ENCODE measurements at regions of chr16 and their contacts with region 1.

Region 1: DNA sequence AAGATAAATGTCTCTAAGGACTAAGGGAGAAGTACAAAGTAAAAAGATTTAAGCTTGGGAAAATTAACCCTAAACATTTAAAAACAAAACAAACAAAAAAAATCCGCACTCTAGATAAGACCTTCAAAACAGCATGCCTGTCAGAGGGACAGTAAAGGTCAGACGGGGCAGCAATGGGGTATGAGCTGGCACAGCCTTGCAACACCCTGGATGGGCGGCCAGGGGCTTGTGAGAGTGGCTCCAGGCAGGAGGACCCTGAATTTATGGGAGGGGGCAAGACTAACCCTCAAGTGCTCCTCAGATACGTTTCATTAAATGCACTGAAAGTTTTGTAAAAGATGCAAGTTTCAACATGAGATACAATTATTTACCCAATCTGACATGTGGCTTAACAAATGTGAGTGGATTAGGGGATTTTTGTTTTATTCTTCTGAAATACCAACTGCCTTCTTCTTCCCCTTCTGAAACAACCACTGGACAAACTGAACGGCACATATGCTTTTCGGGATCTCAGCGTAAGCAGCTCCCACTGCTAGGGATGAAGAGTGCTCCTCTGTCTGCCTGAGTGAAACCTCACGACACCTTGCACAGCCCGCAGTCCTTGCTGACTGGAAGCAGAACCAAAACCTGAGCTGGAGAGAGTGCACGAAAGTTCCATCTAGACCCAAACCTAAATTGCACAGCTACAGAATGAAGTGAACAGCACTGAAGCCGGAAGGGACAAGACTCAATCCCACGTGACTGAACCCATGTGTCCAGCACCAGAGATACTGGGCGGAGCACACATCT is 128.4 kb downstream of the ANKRD11 start:
- DNase-seq: no peak
- ATAC-seq: no peak
- H3K4me3 ChIP-seq: peak overlapping the region in 1 of 2 experiments; percentile 16
- H3K4me3 Mint-ChIP-seq: peak overlapping the region; percentile 8
- H3K27ac ChIP-seq: peak overlapping the region; percentile 11 to 56
- H3K27ac Mint-ChIP-seq: peak overlapping the region; percentile 92
- H3K4me1 ChIP-seq: peaks cover 80% of the 10 kb centered on the region
- H3K4me1 Mint-ChIP-seq: peaks cover 94% of the 10 kb centered on the region
- H3K27me3 ChIP-seq: no peaks in the 10 kb centered on the region
- H3K27me3 Mint-ChIP-seq: no peaks in the 10 kb centered on the region
- CTCF ChIP-seq: no peak

Region 2: GRCh38 chr16:88578446-88579313 is 783.3 kb before region 1 on chr16:
- CTCF ChIA-PET with region 1: no interaction called
- POLR2A ChIA-PET with region 1: no interaction called
- intact Hi-C with region 1: no loop called
- DNase-seq: peak in 2 of 9 experiments; percentile 36 to 49
- ATAC-seq: peak; percentile 69
- H3K4me3 ChIP-seq: no peak overlapping the region
- H3K4me3 Mint-ChIP-seq: peak overlapping the region; percentile 45
- H3K27ac ChIP-seq: no peak overlapping the region
- H3K27ac Mint-ChIP-seq: peak overlapping the region; percentile 85
- H3K4me1 ChIP-seq: peaks cover 21% of the 10 kb centered on the region
- H3K4me1 Mint-ChIP-seq: peaks cover 49% of the 10 kb centered on the region
- H3K27me3 ChIP-seq: no peaks in the 10 kb centered on the region
- H3K27me3 Mint-ChIP-seq: no peaks in the 10 kb centered on the region
- CTCF ChIP-seq: no peak

Region 3: DNA sequence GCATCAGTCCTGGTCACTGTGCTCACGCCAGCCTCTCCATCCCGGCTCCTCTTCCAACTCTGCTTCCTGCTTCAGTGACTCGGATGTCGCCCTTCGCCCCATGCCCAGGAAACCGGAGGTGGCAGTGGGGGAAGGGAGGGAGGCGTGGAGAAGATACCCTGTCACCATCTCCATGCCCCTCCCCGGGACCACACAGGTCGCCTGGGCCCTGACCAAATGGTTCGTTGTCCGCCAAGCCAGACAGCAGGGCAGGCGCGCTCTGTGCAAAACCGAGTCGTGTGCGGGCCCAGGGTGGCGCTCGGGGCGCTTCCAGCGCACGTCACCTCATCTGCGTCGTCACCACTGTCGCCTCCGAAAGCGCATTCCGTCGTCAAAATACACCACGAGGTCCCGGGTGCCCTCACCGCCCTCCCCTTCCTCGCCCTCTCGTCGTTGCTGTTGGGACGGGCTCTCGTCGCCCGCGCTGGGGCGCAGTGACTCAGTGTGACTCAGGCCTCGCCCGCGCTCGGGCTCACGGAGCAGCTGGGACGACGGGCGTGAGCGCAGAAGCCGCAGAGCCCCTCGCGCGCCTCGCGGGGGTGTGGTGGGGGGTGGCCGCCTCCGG is 105.2 kb before region 1 on chr16:
- CTCF ChIA-PET with region 1: no interaction called
- POLR2A ChIA-PET with region 1: no interaction called
- intact Hi-C with region 1: no loop called
- DNase-seq: peak; percentile 43 to 92 (median 70)
- ATAC-seq: peak; percentile 95
- H3K4me3 ChIP-seq: peak overlapping the region; percentile 24 to 49
- H3K4me3 Mint-ChIP-seq: peak overlapping the region; percentile 70
- H3K27ac ChIP-seq: no peak overlapping the region
- H3K27ac Mint-ChIP-seq: peak overlapping the region; percentile 52
- H3K4me1 ChIP-seq: peaks cover 12% of the 10 kb centered on the region
- H3K4me1 Mint-ChIP-seq: peaks cover 13% of the 10 kb centered on the region
- H3K27me3 ChIP-seq: peaks cover 0 to 14% of the 10 kb centered on the region in 2 experiments
- H3K27me3 Mint-ChIP-seq: peaks cover 19% of the 10 kb centered on the region
- CTCF ChIP-seq: no peak

Region 4: DNA sequence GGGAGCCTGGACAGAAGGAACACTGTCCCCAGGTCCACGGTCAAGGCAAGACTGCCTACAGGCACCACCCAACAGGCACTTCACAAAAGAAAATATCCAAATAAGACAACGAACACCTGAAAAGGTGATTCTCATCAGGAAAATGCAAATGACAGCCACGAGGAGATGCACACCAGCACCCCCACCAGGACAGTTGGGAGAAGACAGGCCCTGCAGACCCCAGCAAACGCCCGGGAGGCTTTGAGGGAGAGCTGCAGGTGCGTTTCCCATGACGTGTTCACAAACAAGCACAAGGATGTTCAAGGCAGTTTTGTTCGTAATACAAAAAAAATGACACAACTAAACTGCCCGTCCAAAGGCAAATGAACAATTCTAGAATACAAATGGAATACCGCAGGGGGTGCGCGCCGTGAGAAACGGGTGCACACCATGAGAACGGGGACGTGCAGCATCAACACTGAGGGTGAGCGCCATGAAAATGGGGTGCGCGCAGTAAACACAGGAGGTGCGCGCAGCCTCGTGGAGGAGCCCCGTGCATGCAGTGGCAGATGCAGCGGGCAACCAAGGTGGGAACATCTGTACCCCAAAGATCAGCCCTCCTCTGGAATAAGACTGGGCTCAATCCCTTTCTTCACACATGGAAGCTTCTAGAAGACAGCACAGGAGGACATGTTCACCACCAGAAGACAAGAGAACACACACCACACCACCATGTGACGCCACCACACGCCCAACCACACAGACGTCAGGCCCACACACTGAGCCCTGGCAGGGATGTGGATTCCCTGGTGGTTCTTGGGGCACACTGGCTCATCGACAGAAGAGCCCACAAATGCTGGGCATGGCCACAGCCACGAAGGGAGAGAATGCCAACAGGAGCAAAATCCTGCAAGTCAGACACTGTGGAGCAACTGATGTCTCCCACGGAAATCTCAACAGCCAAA is 53.3 kb before region 1 on chr16:
- CTCF ChIA-PET with region 1: no interaction called
- POLR2A ChIA-PET with region 1: no interaction called
- intact Hi-C with region 1: no loop called
- DNase-seq: peak in 5 of 9 experiments; percentile 29 to 78 (median 72)
- ATAC-seq: peak; percentile 75
- H3K4me3 ChIP-seq: no peak overlapping the region
- H3K4me3 Mint-ChIP-seq: no peak overlapping the region
- H3K27ac ChIP-seq: no peak overlapping the region
- H3K27ac Mint-ChIP-seq: peak overlapping the region; percentile 80
- H3K4me1 ChIP-seq: peaks cover 45% of the 10 kb centered on the region
- H3K4me1 Mint-ChIP-seq: peaks cover 62% of the 10 kb centered on the region
- H3K27me3 ChIP-seq: no peaks in the 10 kb centered on the region
- H3K27me3 Mint-ChIP-seq: no peaks in the 10 kb centered on the region
- CTCF ChIP-seq: peak; percentile 71

Region 5: DNA sequence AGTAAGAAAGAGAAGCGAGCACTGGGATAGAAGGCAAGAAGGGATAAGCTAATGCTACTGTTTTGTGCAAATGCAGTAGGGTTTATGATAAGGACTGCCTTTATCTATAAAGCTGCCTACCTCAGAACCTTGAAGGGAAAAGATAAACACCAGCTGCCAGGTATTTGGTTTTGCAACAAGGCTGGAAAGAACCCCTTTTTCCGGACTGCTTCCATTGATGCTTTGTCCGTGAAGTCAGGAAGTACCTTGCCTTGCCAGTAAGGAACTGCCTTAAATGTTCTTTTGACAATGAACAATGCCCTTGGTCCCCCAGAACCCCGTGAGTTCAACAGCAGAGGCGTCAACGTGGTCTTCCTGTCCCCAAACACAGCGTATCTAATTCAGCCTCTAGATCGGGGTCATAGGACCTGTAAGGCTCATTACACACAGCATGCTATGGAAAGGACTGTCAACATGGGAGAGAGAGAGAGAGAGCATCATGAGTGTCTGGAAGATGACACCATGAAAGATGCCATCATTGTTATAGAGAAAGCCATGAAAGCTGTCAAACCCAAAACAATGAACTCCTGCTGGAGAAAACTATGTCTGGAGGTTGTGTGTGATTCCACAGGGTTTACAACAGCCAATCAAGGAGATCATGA is 15.0 kb after region 1 on chr16:
- CTCF ChIA-PET with region 1: interaction called, 4 read pairs
- POLR2A ChIA-PET with region 1: no interaction called
- intact Hi-C with region 1: loop called in 1 of 2 experiments (anchors 2 kb)
- DNase-seq: no peak
- ATAC-seq: peak; percentile 21
- H3K4me3 ChIP-seq: no peak overlapping the region
- H3K4me3 Mint-ChIP-seq: peak overlapping the region; percentile 0
- H3K27ac ChIP-seq: peak overlapping the region in 1 of 2 experiments; percentile 40
- H3K27ac Mint-ChIP-seq: peak overlapping the region; percentile 52
- H3K4me1 ChIP-seq: peaks cover 73% of the 10 kb centered on the region
- H3K4me1 Mint-ChIP-seq: peaks cover 90% of the 10 kb centered on the region
- H3K27me3 ChIP-seq: no peaks in the 10 kb centered on the region
- H3K27me3 Mint-ChIP-seq: no peaks in the 10 kb centered on the region
- CTCF ChIP-seq: no peak

Region 6: GRCh38 chr16:89393738-89394406 is 31.9 kb after region 1 on chr16:
- CTCF ChIA-PET with region 1: no interaction called
- POLR2A ChIA-PET with region 1: no interaction called
- intact Hi-C with region 1: loop called in 1 of 2 experiments (anchors 5 kb)
- DNase-seq: no peak
- ATAC-seq: no peak
- H3K4me3 ChIP-seq: no peak overlapping the region
- H3K4me3 Mint-ChIP-seq: no peak overlapping the region
- H3K27ac ChIP-seq: no peak overlapping the region
- H3K27ac Mint-ChIP-seq: peak overlapping the region; percentile 0
- H3K4me1 ChIP-seq: peaks cover 44% of the 10 kb centered on the region
- H3K4me1 Mint-ChIP-seq: peaks cover 77% of the 10 kb centered on the region
- H3K27me3 ChIP-seq: no peaks in the 10 kb centered on the region
- H3K27me3 Mint-ChIP-seq: no peaks in the 10 kb centered on the region
- CTCF ChIP-seq: no peak

Region 7: GRCh38 chr16:89517128-89517527 is 155.2 kb after region 1 on chr16:
- CTCF ChIA-PET with region 1: no interaction called
- POLR2A ChIA-PET with region 1: no interaction called
- intact Hi-C with region 1: no loop called
- DNase-seq: no peak
- ATAC-seq: no peak
- H3K4me3 ChIP-seq: no peak overlapping the region
- H3K4me3 Mint-ChIP-seq: no peak overlapping the region
- H3K27ac ChIP-seq: no peak overlapping the region
- H3K27ac Mint-ChIP-seq: no peak overlapping the region
- H3K4me1 ChIP-seq: no peaks in the 10 kb centered on the region
- H3K4me1 Mint-ChIP-seq: peaks cover 3% of the 10 kb centered on the region
- H3K27me3 ChIP-seq: no peaks in the 10 kb centered on the region
- H3K27me3 Mint-ChIP-seq: no peaks in the 10 kb centered on the region
- CTCF ChIP-seq: no peak

Measured in CD8-positive, alpha-beta T cell (primary cell).